Breast epithelium (tissue), 4 donors: ENCODE measurements at regions of chr5 and their contacts with region 1.

Region 1: GRCh38 chr5:74156728-74157383 is 483.7 kb downstream of the ENC1 start:
- DNase-seq: no peak
- H3K4me3 ChIP-seq: no peak overlapping the region
- H3K27ac ChIP-seq: no peak overlapping the region
- H3K4me1 ChIP-seq: no peaks in the 10 kb centered on the region
- H3K27me3 ChIP-seq: no peaks in the 10 kb centered on the region
- CTCF ChIP-seq: no peak
- POLR2A ChIP-seq: no peak

Region 2: GRCh38 chr5:72837524-72838096 is 1319.2 kb before region 1 on chr5:
- intact Hi-C with region 1: no loop called
- DNase-seq: no peak
- H3K4me3 ChIP-seq: no peak overlapping the region
- H3K27ac ChIP-seq: no peak overlapping the region
- H3K4me1 ChIP-seq: peaks cover 0 to 5% of the 10 kb centered on the region in 2 donors
- H3K27me3 ChIP-seq: no peaks in the 10 kb centered on the region
- CTCF ChIP-seq: no peak
- POLR2A ChIP-seq: no peak

Region 3: DNA sequence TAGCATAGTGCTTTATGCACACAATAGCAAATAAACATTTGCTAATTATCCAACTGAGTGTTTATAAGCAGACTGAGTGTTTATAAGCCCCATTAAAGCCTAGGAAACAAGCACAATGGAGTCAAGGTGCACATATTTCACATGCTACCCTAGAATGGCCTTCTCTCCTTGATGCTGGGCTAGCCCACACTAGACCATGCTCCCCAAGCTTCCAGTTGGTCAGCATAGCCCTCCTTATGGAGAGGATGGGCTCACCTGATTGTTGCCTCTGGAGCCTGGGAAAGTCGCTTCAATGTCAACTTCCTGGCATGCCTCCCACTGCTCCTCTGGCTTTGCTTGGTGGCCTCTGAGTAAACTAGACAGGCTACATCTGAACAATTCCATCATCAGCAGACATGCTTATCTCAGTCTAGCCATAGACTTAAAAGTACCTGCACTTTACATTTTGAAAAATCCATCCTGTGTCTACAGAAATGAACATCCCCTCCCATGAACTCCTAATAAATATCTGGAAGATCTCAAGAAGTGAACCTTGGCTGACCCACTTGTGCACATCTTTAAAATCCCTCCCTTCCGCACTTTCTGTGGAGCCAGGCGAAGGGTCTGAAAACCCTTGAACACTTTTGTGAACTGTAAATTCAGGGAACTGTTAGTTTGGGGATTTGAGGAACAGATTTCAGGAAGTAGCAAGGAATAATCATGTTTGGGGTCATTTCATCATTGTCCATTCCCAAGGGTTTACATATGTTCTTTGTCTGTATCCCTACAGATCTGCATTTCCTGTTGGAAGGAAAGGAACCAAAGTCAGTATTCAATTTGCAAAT is 44.3 kb before region 1 on chr5:
- intact Hi-C with region 1: loop called (anchors 2 kb)
- DNase-seq: no peak
- H3K4me3 ChIP-seq: no peak overlapping the region
- H3K27ac ChIP-seq: no peak overlapping the region
- H3K4me1 ChIP-seq: no peaks in the 10 kb centered on the region
- H3K27me3 ChIP-seq: no peaks in the 10 kb centered on the region
- CTCF ChIP-seq: no peak
- POLR2A ChIP-seq: no peak

Region 4: GRCh38 chr5:74212336-74212735 is 55.5 kb after region 1 on chr5:
- intact Hi-C with region 1: no loop called
- DNase-seq: no peak
- H3K4me3 ChIP-seq: no peak overlapping the region
- H3K27ac ChIP-seq: no peak overlapping the region
- H3K4me1 ChIP-seq: no peaks in the 10 kb centered on the region
- H3K27me3 ChIP-seq: no peaks in the 10 kb centered on the region
- CTCF ChIP-seq: no peak
- POLR2A ChIP-seq: no peak

Region 5: GRCh38 chr5:74224331-74224730 is 67.5 kb after region 1 on chr5:
- intact Hi-C with region 1: no loop called
- DNase-seq: no peak
- H3K4me3 ChIP-seq: no peak overlapping the region
- H3K27ac ChIP-seq: no peak overlapping the region
- H3K4me1 ChIP-seq: no peaks in the 10 kb centered on the region
- H3K27me3 ChIP-seq: no peaks in the 10 kb centered on the region
- CTCF ChIP-seq: no peak
- POLR2A ChIP-seq: no peak